ENCODE measurements at regions of chr12 and their contacts with region 1.

Region 1: GRCh38 chr12:26125400-26126339 is 833 bp upstream of the BHLHE41 start:
- DNase-seq: peak; percentile 24
- H3K4me3 ChIP-seq: peak overlapping the region; percentile 69
- CTCF ChIP-seq: no peak

Region 2: GRCh38 chr12:26274441-26275312 is 149.0 kb after region 1 on chr12:
- CTCF ChIA-PET with region 1: interaction called, 23 read pairs
- POLR2A ChIA-PET with region 1: interaction called, 5 read pairs
- DNase-seq: peak; percentile 98
- H3K4me3 ChIP-seq: no peak overlapping the region; the same call in 1 of the 2 replicates
- CTCF ChIP-seq: peak; percentile 17

Measured in AG04449 (cell line).